Aorta (tissue), 5 donors: ENCODE measurements at regions of chrX and their contacts with region 1.

Region 1: DNA sequence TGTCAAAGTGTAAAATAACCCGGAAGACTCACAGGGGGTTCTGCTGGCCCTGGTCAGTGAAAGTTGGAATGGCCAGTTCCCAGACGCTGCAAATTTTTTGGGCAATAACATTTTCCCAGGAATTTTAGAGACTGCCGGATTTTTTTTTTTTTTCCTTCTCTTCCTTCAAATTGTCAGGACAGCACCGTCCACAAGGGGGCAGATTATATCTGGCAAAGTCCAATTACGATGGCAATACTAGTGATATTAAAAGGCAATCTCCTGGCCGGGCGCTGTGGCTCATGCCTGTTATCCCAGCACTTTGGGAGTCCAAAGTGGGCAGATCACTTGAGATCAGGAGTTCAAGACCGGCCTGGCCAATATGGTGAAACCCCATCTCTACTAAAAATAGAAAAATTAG is 20.5 kb downstream of the SLC25A5 start:
- DNase-seq: peak; percentile 67 to 76
- ATAC-seq: no peak
- H3K4me3 ChIP-seq: no peak overlapping the region
- H3K27ac ChIP-seq: no peak overlapping the region
- H3K4me1 ChIP-seq: no peaks in the 10 kb centered on the region
- H3K27me3 ChIP-seq: no peaks in the 10 kb centered on the region

Region 2: GRCh38 chrX:119004920-119005524 is 483.7 kb before region 1 on chrX:
- intact Hi-C with region 1: no loop called
- DNase-seq: peak; percentile 55 to 81
- ATAC-seq: peak; percentile 75
- H3K4me3 ChIP-seq: no peak overlapping the region
- H3K27ac ChIP-seq: no peak overlapping the region
- H3K4me1 ChIP-seq: no peaks in the 10 kb centered on the region
- H3K27me3 ChIP-seq: no peaks in the 10 kb centered on the region

Region 3: GRCh38 chrX:119410027-119410823 is 78.5 kb before region 1 on chrX:
- intact Hi-C with region 1: no loop called
- DNase-seq: peak in 1 of 2 donors; percentile 59
- ATAC-seq: no peak
- H3K4me3 ChIP-seq: no peak overlapping the region
- H3K27ac ChIP-seq: no peak overlapping the region
- H3K4me1 ChIP-seq: no peaks in the 10 kb centered on the region
- H3K27me3 ChIP-seq: no peaks in the 10 kb centered on the region

Region 4: DNA sequence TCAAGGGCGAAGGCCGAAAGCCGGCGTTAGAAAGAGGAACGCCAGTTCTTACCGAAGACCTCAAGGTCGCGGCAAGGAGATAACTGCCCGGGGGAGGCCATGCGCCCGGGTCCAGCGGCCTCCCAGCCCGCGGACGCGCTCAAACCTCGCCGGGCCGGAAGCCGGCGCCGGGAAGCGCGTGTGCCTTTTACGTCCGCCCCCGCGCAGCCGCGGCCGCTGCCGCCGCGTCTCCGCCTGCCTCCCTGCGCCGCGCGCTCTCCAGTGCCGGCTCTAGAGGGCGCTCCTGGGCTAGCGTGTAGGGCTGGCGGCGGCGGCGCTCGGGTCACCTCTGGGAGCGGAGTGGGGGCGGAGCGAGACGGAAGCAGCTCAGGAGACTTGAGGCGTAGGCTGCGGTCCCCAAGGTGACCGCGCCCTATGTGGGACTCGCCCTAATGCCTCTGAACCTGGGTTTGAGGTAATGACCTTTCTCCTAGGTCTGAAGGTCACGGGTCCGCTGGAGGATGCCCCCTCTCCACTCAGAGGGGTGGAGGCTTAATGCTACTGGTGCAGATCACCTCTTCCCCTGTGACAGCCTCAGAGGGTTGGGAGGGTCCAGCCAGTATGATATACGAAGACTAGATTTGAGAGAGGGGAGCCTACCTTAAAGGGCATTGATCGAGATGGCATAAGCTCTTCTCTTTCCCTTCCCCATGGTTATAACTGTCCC is 19.7 kb before region 1 on chrX:
- intact Hi-C with region 1: no loop called
- DNase-seq: peak; percentile 90 to 96
- ATAC-seq: peak; percentile 93
- H3K4me3 ChIP-seq: peak overlapping the region; percentile 50 to 62
- H3K27ac ChIP-seq: peak overlapping the region in 1 of 2 donors; percentile 82
- H3K4me1 ChIP-seq: no peaks in the 10 kb centered on the region
- H3K27me3 ChIP-seq: no peaks in the 10 kb centered on the region

Region 5: GRCh38 chrX:119516157-119516702 is 27.5 kb after region 1 on chrX:
- intact Hi-C with region 1: loop called (anchors 2 kb)
- DNase-seq: no peak
- ATAC-seq: peak; percentile 75
- H3K4me3 ChIP-seq: no peak overlapping the region
- H3K27ac ChIP-seq: no peak overlapping the region
- H3K4me1 ChIP-seq: no peaks in the 10 kb centered on the region
- H3K27me3 ChIP-seq: no peaks in the 10 kb centered on the region

Region 6: GRCh38 chrX:119617517-119618164 is 128.9 kb after region 1 on chrX:
- intact Hi-C with region 1: no loop called
- DNase-seq: no peak
- ATAC-seq: no peak
- H3K4me3 ChIP-seq: no peak overlapping the region
- H3K27ac ChIP-seq: no peak overlapping the region
- H3K4me1 ChIP-seq: no peaks in the 10 kb centered on the region
- H3K27me3 ChIP-seq: no peaks in the 10 kb centered on the region